ENCODE measurements at regions of chr5 and their contacts with region 1.

Region 1: DNA sequence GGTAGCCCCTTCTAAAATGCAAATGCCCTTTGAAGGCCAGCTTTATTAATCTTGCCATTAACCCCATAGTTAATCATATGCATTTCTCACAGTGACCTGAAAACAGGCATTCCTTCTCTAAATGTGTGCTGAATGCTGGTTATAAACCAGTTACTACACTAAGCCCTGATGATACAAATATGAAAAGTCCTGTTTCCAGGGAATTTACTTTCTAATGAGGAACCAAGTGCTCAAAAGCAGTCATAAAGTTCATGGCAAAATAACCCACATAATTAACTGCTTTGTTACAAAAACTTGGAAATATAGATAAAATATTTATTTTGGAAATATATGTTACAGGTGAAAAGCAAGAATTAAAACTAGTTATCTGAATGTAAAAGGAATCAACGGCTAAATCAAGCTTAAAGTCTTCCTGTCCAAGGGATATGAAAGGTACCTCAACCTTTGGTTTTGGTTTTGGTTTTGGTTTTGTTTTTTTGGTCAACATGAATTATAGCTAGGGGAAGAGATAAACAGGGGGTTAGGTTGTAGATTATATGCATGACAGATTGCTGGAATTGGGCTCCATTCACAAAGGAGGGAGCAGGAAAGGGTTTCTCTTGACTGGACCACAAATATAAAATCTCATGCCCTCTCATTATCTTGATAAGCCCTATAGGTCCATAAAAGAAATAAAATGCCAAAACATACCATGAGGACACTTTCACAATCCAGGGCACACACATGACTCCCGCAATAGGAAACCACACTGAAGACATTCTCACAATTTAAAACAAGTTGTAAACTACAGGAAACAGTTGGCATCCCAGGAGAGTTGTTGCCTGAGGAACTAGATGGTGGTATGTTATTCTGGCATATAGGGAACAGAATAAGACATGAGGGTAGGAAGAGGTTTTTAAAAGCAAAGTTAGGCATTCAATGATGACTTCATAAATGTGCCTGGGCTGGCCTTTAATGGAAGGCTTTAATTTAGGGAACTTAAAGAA is 46.7 kb upstream of the MACIR start:
- DNase-seq: no peak
- ATAC-seq: peak; percentile 12
- H3K4me3 ChIP-seq: no peak overlapping the region
- H3K4me3 Mint-ChIP-seq: peak overlapping the region in 4 of 10 donors; percentile 7 to 71 (median 21)
- H3K27ac ChIP-seq: no peak overlapping the region
- H3K27ac Mint-ChIP-seq: peak overlapping the region in 4 of 9 donors; percentile 41 to 69 (median 56)
- H3K4me1 ChIP-seq: peaks cover 0 to 7% of the 10 kb centered on the region in 2 donors
- H3K4me1 Mint-ChIP-seq: peaks cover 10 to 31% (median 14%) of the 10 kb centered on the region in 7 donors
- H3K27me3 ChIP-seq: no peaks in the 10 kb centered on the region
- H3K27me3 Mint-ChIP-seq: no peaks in the 10 kb centered on the region

Region 2: GRCh38 chr5:103188436-103188835 is 23.4 kb before region 1 on chr5:
- CTCF ChIA-PET with region 1: interaction called, 3 read pairs
- POLR2A ChIA-PET with region 1: interaction called, 3 read pairs
- intact Hi-C with region 1: loop called in 1 of 2 experiments (anchors 2 kb)
- DNase-seq: peak in 1 of 9 donors; percentile 9
- ATAC-seq: no peak
- H3K4me3 ChIP-seq: no peak overlapping the region
- H3K4me3 Mint-ChIP-seq: peak overlapping the region in 4 of 10 donors; percentile 32 to 65 (median 44)
- H3K27ac ChIP-seq: no peak overlapping the region
- H3K27ac Mint-ChIP-seq: peak overlapping the region in 6 of 9 donors; percentile 15 to 67 (median 44)
- H3K4me1 ChIP-seq: peaks cover 0 to 4% of the 10 kb centered on the region in 2 donors
- H3K4me1 Mint-ChIP-seq: peaks cover 1 to 16% (median 14%) of the 10 kb centered on the region in 7 donors
- H3K27me3 ChIP-seq: no peaks in the 10 kb centered on the region
- H3K27me3 Mint-ChIP-seq: no peaks in the 10 kb centered on the region